ENCODE measurements at regions of chr4 and their contacts with region 1.

Region 1: DNA sequence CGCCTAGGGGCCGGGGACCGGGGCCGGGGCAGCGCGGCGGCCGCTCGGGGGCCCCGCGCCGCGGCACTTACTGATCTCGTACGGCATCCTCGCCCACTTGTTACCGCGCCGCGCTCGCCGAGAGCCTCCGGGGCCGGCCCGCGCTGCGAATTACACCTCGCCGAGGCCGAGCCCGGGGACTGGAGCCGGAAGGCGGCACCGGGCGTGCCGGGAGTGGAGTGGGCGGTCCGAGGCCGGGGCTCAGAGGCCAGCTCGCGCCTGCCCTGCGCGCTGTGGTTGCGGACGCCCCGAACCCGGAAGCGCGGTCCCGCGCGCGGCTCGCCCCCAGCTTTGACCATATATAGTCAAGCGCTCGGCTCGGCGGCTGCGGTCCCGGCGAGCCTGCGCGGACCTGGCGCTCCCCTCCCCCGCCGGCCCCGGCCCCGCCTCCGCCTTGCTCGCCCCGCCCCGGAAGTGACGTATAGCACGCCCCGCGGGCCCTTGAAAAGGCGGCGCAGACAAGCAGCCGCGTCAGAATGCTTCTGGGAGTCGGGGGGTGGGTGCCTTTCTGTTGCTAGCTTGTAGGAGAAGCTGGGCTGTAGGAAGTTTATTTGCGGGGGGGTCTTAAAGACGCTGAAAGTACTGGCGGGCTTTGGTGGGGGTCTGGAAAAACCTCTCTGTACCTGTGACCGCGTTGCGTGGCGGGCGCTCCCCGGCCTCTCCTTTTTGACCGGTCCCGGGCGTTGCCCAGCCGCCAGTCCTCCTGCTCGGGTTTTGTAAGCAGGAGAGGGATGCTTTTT is at the start of gene WDR1:
- DNase-seq: peak; percentile 90
- H3K4me3 ChIP-seq: peak within 1 kb of the TSS; percentile 87
- H3K27ac ChIP-seq: peak within 1 kb of the TSS; percentile 91
- H3K27me3 ChIP-seq: peaks cover 2% of the 10 kb centered on the region
- CTCF ChIP-seq: no peak
- polyA plus RNA-seq, gene WDR1: 722 and 735 TPM in 2 replicates

Region 2: DNA sequence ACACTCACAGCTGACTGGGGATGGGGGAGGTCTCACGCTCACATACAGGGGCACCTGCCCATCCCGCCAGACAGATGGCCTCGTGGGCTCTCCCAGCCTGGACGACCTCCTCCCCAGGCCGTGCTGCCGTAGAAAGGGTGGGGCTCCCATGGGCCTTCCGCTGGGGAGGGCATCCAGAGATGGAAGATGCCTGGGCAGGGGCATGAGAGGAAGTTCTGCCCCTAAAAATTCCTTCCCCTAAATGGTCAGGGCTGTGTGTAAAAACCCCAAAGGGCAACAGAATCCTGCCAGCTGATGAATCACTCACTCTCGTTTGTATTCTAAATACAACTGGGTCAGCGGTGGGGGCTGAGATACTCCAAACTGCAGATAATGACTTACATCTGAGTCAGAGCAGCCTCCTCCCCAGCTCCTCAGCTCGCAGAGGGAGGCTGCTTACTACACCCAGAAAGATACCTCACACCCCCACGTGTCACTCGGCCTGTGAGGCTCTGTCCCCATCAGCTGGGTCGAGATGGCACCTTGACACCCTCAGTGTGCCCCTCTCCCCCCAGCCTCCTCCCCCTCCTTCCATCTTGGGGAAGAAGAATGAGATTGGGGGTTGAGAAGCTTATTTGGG is 10.2 kb before region 1 on chr4:
- CTCF ChIA-PET with region 1: no interaction called
- POLR2A ChIA-PET with region 1: interaction called, 48 read pairs
- DNase-seq: peak; percentile 92
- H3K4me3 ChIP-seq: peak overlapping the region; percentile 48
- H3K27ac ChIP-seq: peak overlapping the region; percentile 96
- H3K27me3 ChIP-seq: no peaks in the 10 kb centered on the region
- CTCF ChIP-seq: no peak

Region 3: GRCh38 chr4:10354225-10354624 is 237.5 kb after region 1 on chr4:
- CTCF ChIA-PET with region 1: no interaction called
- POLR2A ChIA-PET with region 1: no interaction called
- DNase-seq: no peak
- H3K4me3 ChIP-seq: no peak overlapping the region
- H3K27ac ChIP-seq: no peak overlapping the region
- H3K27me3 ChIP-seq: no peaks in the 10 kb centered on the region
- CTCF ChIP-seq: no peak

Measured in AG04450 (cell line).